ENCODE measurements at regions of chr14 and their contacts with region 1.

Region 1: DNA sequence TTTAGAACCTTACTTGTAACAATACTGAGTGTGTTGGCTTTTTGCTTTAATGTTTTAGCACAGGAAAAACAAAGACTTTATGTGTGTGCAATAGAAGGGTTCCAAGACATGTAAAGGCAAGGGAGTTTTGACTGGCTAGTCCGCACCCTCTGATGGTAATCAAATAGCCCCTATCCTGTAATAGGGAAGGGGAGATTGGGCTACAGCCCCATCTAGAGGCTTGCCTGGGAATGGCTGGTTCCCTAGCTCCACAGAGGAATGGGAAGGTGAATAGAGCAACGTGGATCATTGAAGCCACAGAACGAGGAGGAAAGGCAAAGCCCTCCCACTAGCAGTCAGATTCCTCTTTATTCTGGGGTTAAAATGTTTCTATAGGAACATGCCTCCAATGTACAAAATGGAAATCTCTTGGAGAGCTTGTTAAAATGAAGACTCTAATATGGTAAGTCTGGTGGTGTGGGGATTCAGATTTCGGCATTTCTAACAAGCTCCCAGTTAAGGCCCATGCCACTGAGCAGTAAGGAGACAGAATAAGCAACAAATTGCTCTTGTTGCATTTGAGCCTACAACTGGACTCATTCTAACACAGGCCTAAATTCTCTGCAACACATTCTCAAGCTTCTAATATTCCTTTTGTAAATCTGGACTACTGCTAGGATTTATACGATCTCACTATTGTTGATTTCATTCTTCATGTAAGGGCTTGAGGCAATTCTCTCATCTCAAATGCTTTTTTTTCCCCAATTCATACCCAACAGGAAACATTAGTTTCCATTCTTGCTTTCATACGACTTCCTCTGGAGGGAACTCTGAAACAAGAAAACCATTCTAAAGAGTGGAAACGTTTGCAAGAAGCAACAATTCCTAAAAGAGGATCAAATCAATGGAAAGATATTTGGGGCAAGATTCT is 57.1 kb downstream of the NIN start:
- DNase-seq: peak in 1 of 2 donors; percentile 30
- H3K4me3 ChIP-seq: no peak overlapping the region
- H3K27ac ChIP-seq: peak overlapping the region; percentile 69 to 78
- H3K4me1 ChIP-seq: peaks cover 0 to 58% (median 32%) of the 10 kb centered on the region in 4 donors
- H3K27me3 ChIP-seq: no peaks in the 10 kb centered on the region
- CTCF ChIP-seq: peak; percentile 71 to 80

Region 2: GRCh38 chr14:50542941-50543418 is 230.9 kb before region 1 on chr14:
- intact Hi-C with region 1: loop called (anchors 5 kb)
- DNase-seq: peak in 1 of 2 donors; percentile 30
- H3K4me3 ChIP-seq: no peak overlapping the region
- H3K27ac ChIP-seq: no peak overlapping the region
- H3K4me1 ChIP-seq: peaks cover 0 to 10% (median 0%) of the 10 kb centered on the region in 4 donors
- H3K27me3 ChIP-seq: no peaks in the 10 kb centered on the region
- CTCF ChIP-seq: peak; percentile 50 to 60

Region 3: DNA sequence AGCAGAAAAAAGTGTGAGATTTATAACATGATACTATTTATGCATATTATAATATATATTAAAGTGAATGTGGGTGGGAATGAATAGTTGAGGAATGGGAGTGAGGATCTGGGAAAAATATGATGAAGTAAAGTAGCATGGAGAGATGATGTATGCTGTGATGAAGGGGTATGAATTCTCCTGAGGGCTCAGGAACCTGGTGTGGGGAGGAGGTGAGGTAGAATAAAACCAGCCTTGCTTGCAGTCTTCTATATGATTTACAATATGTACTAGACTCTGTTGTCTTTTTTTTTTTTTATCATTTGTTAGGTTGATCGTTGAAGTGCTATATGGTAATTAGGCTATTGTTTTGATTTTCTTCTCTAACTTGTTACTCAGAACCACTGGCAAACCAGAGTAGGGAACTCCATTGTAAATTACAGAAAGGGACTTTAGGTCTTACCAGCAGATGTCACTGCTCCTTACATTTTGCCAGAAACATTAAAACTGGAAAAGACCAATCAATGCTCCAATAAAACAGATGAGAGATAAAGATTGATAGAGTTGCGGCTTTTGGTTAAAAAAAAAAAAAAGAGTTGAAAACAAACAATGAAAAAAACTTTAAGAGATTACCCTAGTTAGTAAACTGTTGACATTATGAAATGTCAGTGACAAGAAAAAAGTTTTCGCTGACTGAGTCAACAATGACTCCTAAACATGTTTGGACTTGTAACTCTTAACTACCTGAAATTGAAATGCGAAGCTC is 174.0 kb before region 1 on chr14:
- intact Hi-C with region 1: no loop called
- DNase-seq: no peak
- H3K4me3 ChIP-seq: no peak overlapping the region
- H3K27ac ChIP-seq: no peak overlapping the region
- H3K4me1 ChIP-seq: no peaks in the 10 kb centered on the region
- H3K27me3 ChIP-seq: no peaks in the 10 kb centered on the region
- CTCF ChIP-seq: peak; percentile 51 to 53

Region 4: DNA sequence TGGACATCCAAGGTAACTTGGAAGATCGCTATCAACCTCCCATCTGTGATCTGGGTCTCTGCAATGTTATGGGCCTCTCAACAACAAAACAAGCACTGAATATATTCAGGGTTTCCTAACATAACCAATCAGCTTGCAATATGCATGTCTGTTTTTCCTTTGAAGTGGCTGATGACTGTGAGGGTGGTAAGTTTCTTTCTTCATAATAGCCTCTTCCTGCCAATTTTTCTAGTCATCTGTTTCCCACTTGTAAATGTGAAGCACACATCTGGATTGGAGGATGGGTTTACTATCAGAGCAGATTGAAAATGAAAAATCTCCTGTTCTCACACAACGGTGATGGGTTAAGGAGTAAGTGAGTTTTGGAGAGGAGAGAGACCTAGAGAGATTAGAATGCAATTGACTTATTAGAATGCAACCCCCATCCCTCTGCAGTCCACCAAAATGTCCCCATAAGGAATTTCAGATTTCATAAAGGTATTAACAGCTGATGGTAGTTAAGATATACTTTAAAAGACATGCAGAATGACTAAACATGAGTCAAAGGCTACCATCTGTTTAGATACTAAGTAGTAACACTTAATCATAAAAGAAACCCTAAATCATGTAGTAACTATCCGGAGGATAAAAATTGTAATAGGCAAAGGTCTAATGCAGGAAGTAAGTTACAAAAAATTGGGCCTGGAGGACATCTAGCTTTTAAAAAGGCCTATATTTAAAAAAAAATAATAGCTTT is 47.3 kb before region 1 on chr14:
- intact Hi-C with region 1: no loop called
- DNase-seq: no peak
- H3K4me3 ChIP-seq: no peak overlapping the region
- H3K27ac ChIP-seq: no peak overlapping the region
- H3K4me1 ChIP-seq: no peaks in the 10 kb centered on the region
- H3K27me3 ChIP-seq: no peaks in the 10 kb centered on the region
- CTCF ChIP-seq: no peak

Region 5: DNA sequence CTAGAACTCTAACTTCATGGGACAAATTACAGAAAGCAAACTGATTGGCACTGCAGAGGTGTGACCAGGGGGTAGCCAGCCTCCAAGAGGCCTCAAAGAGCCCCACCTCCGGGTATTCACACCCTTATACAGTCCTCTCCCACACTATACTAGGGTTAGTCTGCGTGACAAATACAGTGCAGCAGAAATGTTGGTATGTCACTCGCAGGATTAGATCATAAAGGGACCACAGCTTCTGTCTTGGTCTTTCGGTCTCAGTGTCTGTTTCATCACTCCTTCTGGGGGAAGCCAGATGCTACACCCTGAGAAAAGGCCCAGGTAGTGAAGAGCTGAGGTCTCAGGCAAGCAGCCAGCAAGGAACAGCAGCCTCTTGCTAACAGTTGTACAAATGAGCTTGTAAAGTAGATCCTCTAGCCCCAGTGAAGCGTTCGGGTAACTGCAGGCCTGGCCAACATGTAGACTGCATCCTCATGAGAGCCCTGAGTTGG is 36.9 kb before region 1 on chr14:
- intact Hi-C with region 1: loop called (anchors 5 kb)
- DNase-seq: no peak
- H3K4me3 ChIP-seq: no peak overlapping the region
- H3K27ac ChIP-seq: no peak overlapping the region
- H3K4me1 ChIP-seq: peaks cover 0 to 25% (median 4%) of the 10 kb centered on the region in 4 donors
- H3K27me3 ChIP-seq: no peaks in the 10 kb centered on the region
- CTCF ChIP-seq: no peak

Region 6: GRCh38 chr14:50835280-50835679 is 61.4 kb after region 1 on chr14:
- intact Hi-C with region 1: no loop called
- DNase-seq: no peak
- H3K4me3 ChIP-seq: no peak overlapping the region
- H3K27ac ChIP-seq: no peak overlapping the region
- H3K4me1 ChIP-seq: peaks cover 0 to 7% (median 3%) of the 10 kb centered on the region in 4 donors
- H3K27me3 ChIP-seq: peaks cover 0 to 3% of the 10 kb centered on the region in 2 donors
- CTCF ChIP-seq: no peak

Region 7: DNA sequence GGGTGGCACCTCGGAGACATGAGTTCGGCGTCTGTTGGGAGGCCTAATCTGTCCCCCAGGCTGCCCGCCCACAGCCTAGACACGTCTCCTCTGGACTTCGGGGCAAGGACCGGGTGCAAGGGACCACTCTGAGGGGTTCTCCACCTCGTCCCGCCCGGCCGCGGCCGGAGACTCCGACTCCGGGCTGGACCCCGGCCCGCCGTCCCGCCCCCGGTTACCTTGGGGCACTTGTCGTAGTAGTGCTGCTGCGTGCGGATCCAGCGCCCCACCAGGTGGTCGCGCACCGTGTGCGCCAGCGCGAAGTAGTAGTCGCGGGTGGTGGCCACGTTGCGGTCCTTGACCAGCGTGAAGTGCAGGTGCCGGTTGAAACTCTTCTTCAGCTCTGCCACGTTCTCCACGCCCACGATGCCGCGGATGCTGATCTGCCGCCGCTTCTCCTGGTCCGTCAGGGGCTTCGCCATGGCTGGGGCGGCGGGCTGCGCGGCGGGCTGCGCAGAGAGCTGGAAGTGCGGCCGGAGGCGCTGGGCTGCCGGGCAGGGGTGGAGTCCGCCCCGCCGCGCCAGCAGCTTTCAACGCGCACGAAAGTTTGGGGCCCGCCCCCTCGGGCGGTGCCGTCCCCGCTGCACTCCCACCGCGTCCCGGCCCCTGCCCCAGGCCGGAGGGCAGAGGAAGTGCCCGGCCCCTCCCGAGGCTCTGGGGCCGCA is 170.2 kb after region 1 on chr14 and contains the start of gene PYGL:
- intact Hi-C with region 1: no loop called
- DNase-seq: peak; percentile 76 to 87
- H3K4me3 ChIP-seq: peak within 1 kb of the TSS; percentile 68 to 77
- H3K27ac ChIP-seq: peak within 1 kb of the TSS; percentile 84 to 88
- H3K4me1 ChIP-seq: peaks cover 0 to 10% (median 9%) of the 10 kb centered on the region in 4 donors
- H3K27me3 ChIP-seq: no peaks in the 10 kb centered on the region
- CTCF ChIP-seq: no peak

Measured in tibial artery (tissue), 4 donors.